B cell (primary cell): ENCODE measurements at regions of chr14 and their contacts with region 1.

Region 1: GRCh38 chr14:73568381-73568781 is 632 bp upstream of the ACOT2 start:
- DNase-seq: no peak
- ATAC-seq: no peak
- H3K4me3 ChIP-seq: peak overlapping the region in 1 of 5 experiments; percentile 70
- H3K4me3 Mint-ChIP-seq: peak overlapping the region; percentile 92
- H3K27ac ChIP-seq: no peak overlapping the region
- H3K27ac Mint-ChIP-seq: peak overlapping the region; percentile 94
- H3K4me1 ChIP-seq: peaks cover 19 to 32% of the 10 kb centered on the region in 2 donors
- H3K4me1 Mint-ChIP-seq: peaks cover 38% of the 10 kb centered on the region
- H3K27me3 ChIP-seq: no peaks in the 10 kb centered on the region
- H3K27me3 Mint-ChIP-seq: no peaks in the 10 kb centered on the region
- CTCF ChIP-seq: no peak

Region 2: DNA sequence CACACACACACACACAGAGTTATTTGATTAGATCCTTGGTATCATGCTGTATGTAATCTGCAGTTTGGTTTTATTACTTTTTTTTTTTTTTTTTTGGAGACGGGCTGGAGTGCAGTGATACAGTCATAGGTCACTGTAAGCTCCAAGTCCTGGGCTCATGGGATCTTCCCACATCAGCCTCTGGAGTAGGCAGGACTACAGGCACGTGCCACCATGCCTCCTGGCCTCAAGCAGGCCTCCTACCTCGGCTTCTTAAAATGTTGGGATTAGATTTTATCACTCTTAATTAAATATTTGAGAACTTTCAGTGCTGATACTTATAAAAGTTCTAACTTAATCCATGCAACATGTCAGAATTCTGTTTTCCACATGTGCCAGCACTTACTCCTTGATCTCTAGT is 463.3 kb before region 1 on chr14:
- CTCF ChIA-PET with region 1: no interaction called
- POLR2A ChIA-PET with region 1: interaction called, 10 read pairs
- intact Hi-C with region 1: no loop called
- DNase-seq: no peak
- ATAC-seq: no peak
- H3K4me3 ChIP-seq: no peak overlapping the region
- H3K4me3 Mint-ChIP-seq: no peak overlapping the region
- H3K27ac ChIP-seq: no peak overlapping the region
- H3K27ac Mint-ChIP-seq: no peak overlapping the region
- H3K4me1 ChIP-seq: no peaks in the 10 kb centered on the region
- H3K4me1 Mint-ChIP-seq: no peaks in the 10 kb centered on the region
- H3K27me3 ChIP-seq: no peaks in the 10 kb centered on the region
- H3K27me3 Mint-ChIP-seq: no peaks in the 10 kb centered on the region
- CTCF ChIP-seq: no peak

Region 3: GRCh38 chr14:73503648-73504047 is 64.7 kb before region 1 on chr14:
- CTCF ChIA-PET with region 1: interaction called, 44 read pairs
- POLR2A ChIA-PET with region 1: no interaction called
- intact Hi-C with region 1: loop called (anchors 1 kb)
- DNase-seq: no peak
- ATAC-seq: no peak
- H3K4me3 ChIP-seq: no peak overlapping the region
- H3K4me3 Mint-ChIP-seq: no peak overlapping the region
- H3K27ac ChIP-seq: no peak overlapping the region
- H3K27ac Mint-ChIP-seq: no peak overlapping the region
- H3K4me1 ChIP-seq: no peaks in the 10 kb centered on the region
- H3K4me1 Mint-ChIP-seq: no peaks in the 10 kb centered on the region
- H3K27me3 ChIP-seq: no peaks in the 10 kb centered on the region
- H3K27me3 Mint-ChIP-seq: no peaks in the 10 kb centered on the region
- CTCF ChIP-seq: no peak

Region 4: GRCh38 chr14:73613046-73613383 is 44.6 kb after region 1 on chr14:
- CTCF ChIA-PET with region 1: interaction called, 16 read pairs
- POLR2A ChIA-PET with region 1: interaction called, 8 read pairs
- intact Hi-C with region 1: loop called (anchors 1 kb)
- DNase-seq: no peak
- ATAC-seq: peak; percentile 10
- H3K4me3 ChIP-seq: peak overlapping the region; percentile 15 to 73 (median 59)
- H3K4me3 Mint-ChIP-seq: peak overlapping the region; percentile 87
- H3K27ac ChIP-seq: no peak overlapping the region
- H3K27ac Mint-ChIP-seq: peak overlapping the region; percentile 70
- H3K4me1 ChIP-seq: peaks cover 4% of the 10 kb centered on the region in 2 donors
- H3K4me1 Mint-ChIP-seq: peaks cover 6% of the 10 kb centered on the region
- H3K27me3 ChIP-seq: peaks cover 0 to 6% (median 0%) of the 10 kb centered on the region in 4 experiments
- H3K27me3 Mint-ChIP-seq: peaks cover 5% of the 10 kb centered on the region
- CTCF ChIP-seq: no peak

Region 5: GRCh38 chr14:73644531-73645247 is 76.3 kb after region 1 on chr14 and contains the start of gene DNAL1:
- CTCF ChIA-PET with region 1: no interaction called
- POLR2A ChIA-PET with region 1: no interaction called
- intact Hi-C with region 1: loop called (anchors 2 kb)
- DNase-seq: peak; percentile 93
- ATAC-seq: peak; percentile 99
- H3K4me3 ChIP-seq: peak within 1 kb of the TSS; percentile 72 to 85 (median 77)
- H3K4me3 Mint-ChIP-seq: peak within 1 kb of the TSS; percentile 94
- H3K27ac ChIP-seq: peak within 1 kb of the TSS; percentile 45 to 91
- H3K27ac Mint-ChIP-seq: peak within 1 kb of the TSS; percentile 81
- H3K4me1 ChIP-seq: peaks cover 9 to 19% of the 10 kb centered on the region in 2 donors
- H3K4me1 Mint-ChIP-seq: peaks cover 17% of the 10 kb centered on the region
- H3K27me3 ChIP-seq: no peaks in the 10 kb centered on the region
- H3K27me3 Mint-ChIP-seq: no peaks in the 10 kb centered on the region
- CTCF ChIP-seq: no peak
- total RNA-seq, gene DNAL1: 6.3 and 10.7 TPM in 2 replicates

Region 6: DNA sequence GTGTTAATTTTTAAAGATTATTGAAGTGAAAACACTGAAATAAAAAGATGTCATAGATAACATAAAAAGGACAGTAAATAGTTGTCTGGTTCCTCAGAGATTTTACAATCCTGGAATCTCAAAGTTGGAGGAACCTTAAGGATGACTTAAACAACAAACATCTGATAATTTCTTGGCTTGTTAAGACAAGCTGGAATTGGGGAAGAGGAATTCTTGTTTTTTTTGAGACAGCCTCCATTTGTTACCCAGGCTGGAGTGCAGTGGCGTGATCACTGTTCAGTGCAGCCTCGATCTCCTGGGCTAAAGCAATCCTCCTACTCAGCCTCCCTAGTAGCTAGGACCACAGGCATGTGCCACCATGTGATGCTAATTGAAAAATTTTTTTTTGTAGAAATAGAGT is 320.6 kb after region 1 on chr14:
- CTCF ChIA-PET with region 1: no interaction called
- POLR2A ChIA-PET with region 1: no interaction called
- intact Hi-C with region 1: no loop called
- DNase-seq: no peak
- ATAC-seq: no peak
- H3K4me3 ChIP-seq: no peak overlapping the region
- H3K4me3 Mint-ChIP-seq: no peak overlapping the region
- H3K27ac ChIP-seq: peak overlapping the region in 1 of 2 donors; percentile 96
- H3K27ac Mint-ChIP-seq: no peak overlapping the region
- H3K4me1 ChIP-seq: peaks cover 18 to 20% of the 10 kb centered on the region in 2 donors
- H3K4me1 Mint-ChIP-seq: peaks cover 41% of the 10 kb centered on the region
- H3K27me3 ChIP-seq: no peaks in the 10 kb centered on the region
- H3K27me3 Mint-ChIP-seq: no peaks in the 10 kb centered on the region
- CTCF ChIP-seq: no peak